Caco-2 (cell line): ENCODE measurements at regions of chr14 and their contacts with region 1.

Region 1: GRCh38 chr14:51651388-51652167 is at the start of gene FRMD6:
- DNase-seq: peak; percentile 89
- H3K4me3 ChIP-seq: peak within 1 kb of the TSS; percentile 96
- H3K4me3 Mint-ChIP-seq: peak within 1 kb of the TSS; percentile 77
- H3K27ac Mint-ChIP-seq: peak within 1 kb of the TSS; percentile 82
- H3K4me1 ChIP-seq: peaks cover 40% of the 10 kb centered on the region
- H3K4me1 Mint-ChIP-seq: peaks cover 36% of the 10 kb centered on the region
- H3K27me3 ChIP-seq: no peaks in the 10 kb centered on the region
- H3K27me3 Mint-ChIP-seq: no peaks in the 10 kb centered on the region
- CTCF ChIP-seq: peak; percentile 62 to 80
- total RNA-seq, gene FRMD6: 35.7 and 42.2 TPM in 2 replicates

Region 2: GRCh38 chr14:51283402-51284085 is 368.0 kb before region 1 on chr14:
- CTCF ChIA-PET with region 1: interaction called, 18 read pairs
- POLR2A ChIA-PET with region 1: no interaction called
- intact Hi-C with region 1: loop called (anchors 1 kb)
- DNase-seq: peak in 1 of 2 experiments; percentile 73
- H3K4me3 ChIP-seq: no peak overlapping the region
- H3K4me3 Mint-ChIP-seq: no peak overlapping the region
- H3K27ac Mint-ChIP-seq: no peak overlapping the region
- H3K4me1 ChIP-seq: no peaks in the 10 kb centered on the region
- H3K4me1 Mint-ChIP-seq: no peaks in the 10 kb centered on the region
- H3K27me3 ChIP-seq: no peaks in the 10 kb centered on the region
- H3K27me3 Mint-ChIP-seq: no peaks in the 10 kb centered on the region
- CTCF ChIP-seq: peak; percentile 69 to 82

Region 3: DNA sequence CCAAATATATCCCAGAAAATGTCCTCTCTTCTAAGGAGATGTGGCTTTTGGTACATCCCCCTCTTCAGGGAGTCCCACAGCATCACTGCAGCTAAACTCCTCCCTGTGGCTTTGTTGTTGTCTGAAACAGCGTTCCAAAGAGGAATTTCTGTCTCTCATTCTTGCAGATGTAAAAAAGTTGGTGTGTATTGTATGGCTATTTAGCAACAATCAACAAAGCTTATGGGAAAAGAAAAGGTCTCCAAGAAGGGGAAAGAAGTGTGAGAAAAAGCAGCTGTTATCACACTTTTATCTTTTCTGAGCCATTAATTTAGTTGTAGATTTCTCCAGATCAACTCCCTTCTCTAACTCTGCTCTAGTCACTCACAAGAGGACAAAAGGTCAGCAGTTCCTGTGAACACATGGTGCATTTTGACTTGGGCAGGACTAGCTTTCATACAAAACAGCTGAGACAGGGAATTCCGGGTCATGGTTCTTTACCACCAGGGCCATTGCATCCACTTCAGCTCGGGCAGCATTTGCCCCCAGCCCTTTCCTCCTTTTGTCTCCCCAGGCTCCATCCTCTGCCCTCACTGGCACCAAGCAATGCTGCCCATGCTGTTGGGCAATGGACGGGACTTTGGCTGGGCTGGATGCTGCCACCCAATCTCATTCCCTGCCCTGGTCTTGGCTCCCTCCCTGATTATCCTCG is 226.9 kb before region 1 on chr14:
- CTCF ChIA-PET with region 1: no interaction called
- POLR2A ChIA-PET with region 1: no interaction called
- intact Hi-C with region 1: no loop called
- DNase-seq: no peak
- H3K4me3 ChIP-seq: no peak overlapping the region
- H3K4me3 Mint-ChIP-seq: no peak overlapping the region
- H3K27ac Mint-ChIP-seq: no peak overlapping the region
- H3K4me1 ChIP-seq: no peaks in the 10 kb centered on the region
- H3K4me1 Mint-ChIP-seq: no peaks in the 10 kb centered on the region
- H3K27me3 ChIP-seq: no peaks in the 10 kb centered on the region
- H3K27me3 Mint-ChIP-seq: no peaks in the 10 kb centered on the region
- CTCF ChIP-seq: no peak

Region 4: DNA sequence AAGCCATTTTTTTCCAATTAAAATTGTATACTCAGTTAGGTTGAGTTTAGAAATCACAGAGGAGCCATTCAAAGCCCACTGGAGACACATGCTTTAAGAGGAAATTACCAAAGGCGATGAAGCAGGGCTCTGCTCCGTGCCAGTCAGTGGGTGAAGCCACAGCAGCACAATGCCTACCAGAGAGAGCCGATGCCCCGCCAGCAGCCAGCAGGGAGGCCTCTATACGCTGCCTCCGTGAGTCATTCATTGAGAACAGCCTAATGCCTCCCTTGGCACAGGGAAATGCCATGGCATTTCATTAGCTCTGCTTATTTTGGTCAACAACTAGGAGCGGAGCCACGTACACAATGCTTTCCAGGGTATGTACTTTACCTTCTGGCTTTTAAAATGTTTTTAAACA is 197.7 kb before region 1 on chr14:
- CTCF ChIA-PET with region 1: interaction called, 5 read pairs
- POLR2A ChIA-PET with region 1: no interaction called
- intact Hi-C with region 1: loop called (anchors 10 kb)
- DNase-seq: no peak
- H3K4me3 ChIP-seq: no peak overlapping the region
- H3K4me3 Mint-ChIP-seq: no peak overlapping the region
- H3K27ac Mint-ChIP-seq: no peak overlapping the region
- H3K4me1 ChIP-seq: peaks cover 18% of the 10 kb centered on the region
- H3K4me1 Mint-ChIP-seq: peaks cover 36% of the 10 kb centered on the region
- H3K27me3 ChIP-seq: no peaks in the 10 kb centered on the region
- H3K27me3 Mint-ChIP-seq: no peaks in the 10 kb centered on the region
- CTCF ChIP-seq: no peak

Region 5: DNA sequence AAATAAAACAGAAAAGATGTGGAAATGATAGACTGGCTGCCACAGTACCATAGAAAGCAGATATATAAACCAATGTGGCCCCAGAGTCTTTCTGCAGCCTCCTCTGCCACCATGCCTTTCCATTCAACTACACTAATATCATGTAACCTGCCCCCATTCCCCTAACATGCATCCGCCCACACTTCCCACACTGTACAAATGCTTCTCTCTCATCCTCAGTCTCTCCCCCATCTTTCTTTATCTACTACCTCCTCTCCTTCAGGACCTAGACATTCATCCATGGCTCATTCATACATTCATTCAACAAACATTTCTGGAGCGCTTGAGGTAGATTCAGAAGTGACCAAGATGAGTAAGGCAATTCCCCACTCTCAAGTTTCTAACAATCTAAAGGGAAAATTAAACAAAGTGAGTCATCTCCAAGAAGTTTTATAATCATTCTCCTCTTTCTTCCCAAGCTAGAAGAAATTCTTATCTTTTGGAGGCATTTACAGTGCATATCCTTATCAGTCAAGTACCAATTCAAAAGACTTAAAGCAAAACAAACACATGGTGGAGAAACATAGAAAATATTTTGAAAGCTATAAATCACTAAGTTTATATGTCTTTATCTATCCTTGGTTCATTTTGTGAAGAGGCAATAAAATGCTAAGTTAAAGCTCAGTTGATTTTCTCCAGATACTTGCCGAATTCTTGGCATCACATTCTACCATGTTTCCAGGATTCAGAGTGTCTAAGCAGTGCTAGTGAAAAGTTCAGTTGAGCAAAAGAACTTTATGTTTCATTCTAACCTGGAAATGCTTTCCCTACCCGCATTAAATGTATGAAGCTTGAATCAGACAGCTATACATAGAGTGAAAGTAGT is 70.3 kb before region 1 on chr14:
- CTCF ChIA-PET with region 1: interaction called, 3 read pairs
- POLR2A ChIA-PET with region 1: interaction called, 5 read pairs
- intact Hi-C with region 1: loop called (anchors 5 kb)
- DNase-seq: peak in 1 of 2 experiments; percentile 16
- H3K4me3 ChIP-seq: no peak overlapping the region
- H3K4me3 Mint-ChIP-seq: peak overlapping the region; percentile 1
- H3K27ac Mint-ChIP-seq: peak overlapping the region; percentile 46
- H3K4me1 ChIP-seq: peaks cover 50% of the 10 kb centered on the region
- H3K4me1 Mint-ChIP-seq: peaks cover 63% of the 10 kb centered on the region
- H3K27me3 ChIP-seq: no peaks in the 10 kb centered on the region
- H3K27me3 Mint-ChIP-seq: no peaks in the 10 kb centered on the region
- CTCF ChIP-seq: no peak

Region 6: DNA sequence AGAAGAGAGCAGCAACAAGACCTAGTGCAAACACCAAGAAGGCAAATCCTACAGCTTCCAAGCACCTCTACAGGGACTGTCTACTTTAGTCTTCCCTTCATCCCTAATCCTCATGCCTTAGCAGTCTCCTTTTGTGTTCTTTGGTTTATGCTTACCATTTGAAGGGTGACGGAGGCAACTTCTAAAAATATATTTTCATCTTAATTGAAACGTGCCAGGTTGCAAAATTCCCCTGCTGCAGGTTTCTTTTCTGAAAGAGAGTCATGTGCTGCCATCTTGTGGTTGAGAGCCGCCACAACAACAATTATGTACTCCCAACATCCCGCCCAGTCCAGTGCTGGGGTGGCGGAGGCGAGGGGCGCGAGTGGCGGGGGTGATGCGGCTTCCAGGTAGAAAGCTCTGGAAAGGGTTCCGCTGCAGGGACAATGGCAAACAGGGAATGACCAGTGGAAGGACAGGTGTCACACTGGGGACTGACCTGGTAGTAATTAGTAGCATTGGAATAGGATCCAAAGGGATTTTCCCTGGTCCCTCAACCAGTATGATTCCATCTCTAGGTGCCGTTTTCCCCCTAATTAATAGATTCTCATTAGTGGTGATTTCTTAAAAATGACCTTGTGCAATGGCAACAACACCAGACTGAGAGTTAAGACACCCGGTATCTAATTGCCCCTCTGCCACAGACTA is 128.6 kb after region 1 on chr14:
- CTCF ChIA-PET with region 1: interaction called, 5 read pairs
- POLR2A ChIA-PET with region 1: no interaction called
- intact Hi-C with region 1: loop called (anchors 2 kb)
- DNase-seq: peak; percentile 64 to 77
- H3K4me3 ChIP-seq: no peak overlapping the region
- H3K4me3 Mint-ChIP-seq: peak overlapping the region; percentile 38
- H3K27ac Mint-ChIP-seq: no peak overlapping the region
- H3K4me1 ChIP-seq: no peaks in the 10 kb centered on the region
- H3K4me1 Mint-ChIP-seq: peaks cover 8% of the 10 kb centered on the region
- H3K27me3 ChIP-seq: no peaks in the 10 kb centered on the region
- H3K27me3 Mint-ChIP-seq: peaks cover 3% of the 10 kb centered on the region
- CTCF ChIP-seq: peak; percentile 79 to 87

Region 7: GRCh38 chr14:52175982-52176502 is 524.5 kb after region 1 on chr14:
- CTCF ChIA-PET with region 1: no interaction called
- POLR2A ChIA-PET with region 1: no interaction called
- intact Hi-C with region 1: no loop called
- DNase-seq: no peak
- H3K4me3 ChIP-seq: no peak overlapping the region
- H3K4me3 Mint-ChIP-seq: no peak overlapping the region
- H3K27ac Mint-ChIP-seq: no peak overlapping the region
- H3K4me1 ChIP-seq: peaks cover 18% of the 10 kb centered on the region
- H3K4me1 Mint-ChIP-seq: peaks cover 12% of the 10 kb centered on the region
- H3K27me3 ChIP-seq: no peaks in the 10 kb centered on the region
- H3K27me3 Mint-ChIP-seq: no peaks in the 10 kb centered on the region
- CTCF ChIP-seq: no peak